CD14-positive monocyte (primary cell): ENCODE measurements at regions of chr16 and their contacts with region 1.

Region 1: GRCh38 chr16:79089735-79090284 is 510.7 kb downstream of the MAF start:
- DNase-seq: peak; percentile 39 to 65 (median 63)
- H3K4me3 ChIP-seq: peak overlapping the region; percentile 41 to 72 (median 50)
- H3K4me3 Mint-ChIP-seq: peak overlapping the region; percentile 83 to 92
- H3K27ac ChIP-seq: peak overlapping the region; percentile 11 to 58
- H3K27ac Mint-ChIP-seq: peak overlapping the region; percentile 80 to 93 (median 87)
- H3K4me1 ChIP-seq: peaks cover 55 to 58% of the 10 kb centered on the region in 2 donors
- H3K4me1 Mint-ChIP-seq: peaks cover 61% of the 10 kb centered on the region
- H3K27me3 ChIP-seq: no peaks in the 10 kb centered on the region
- H3K27me3 Mint-ChIP-seq: peaks cover 0 to 5% (median 0%) of the 10 kb centered on the region in 3 donors
- CTCF ChIP-seq: no peak

Region 2: GRCh38 chr16:79154086-79154485 is 64.3 kb after region 1 on chr16:
- intact Hi-C with region 1: loop called in 1 of 2 experiments (anchors 10 kb)
- DNase-seq: no peak
- H3K4me3 ChIP-seq: no peak overlapping the region
- H3K4me3 Mint-ChIP-seq: no peak overlapping the region
- H3K27ac ChIP-seq: no peak overlapping the region
- H3K27ac Mint-ChIP-seq: peak overlapping the region in 2 of 7 donors; percentile 20 to 26
- H3K4me1 ChIP-seq: peaks cover 19 to 22% of the 10 kb centered on the region in 2 donors
- H3K4me1 Mint-ChIP-seq: peaks cover 19% of the 10 kb centered on the region
- H3K27me3 ChIP-seq: no peaks in the 10 kb centered on the region
- H3K27me3 Mint-ChIP-seq: peaks cover 0 to 4% (median 2%) of the 10 kb centered on the region in 3 donors
- CTCF ChIP-seq: no peak

Region 3: DNA sequence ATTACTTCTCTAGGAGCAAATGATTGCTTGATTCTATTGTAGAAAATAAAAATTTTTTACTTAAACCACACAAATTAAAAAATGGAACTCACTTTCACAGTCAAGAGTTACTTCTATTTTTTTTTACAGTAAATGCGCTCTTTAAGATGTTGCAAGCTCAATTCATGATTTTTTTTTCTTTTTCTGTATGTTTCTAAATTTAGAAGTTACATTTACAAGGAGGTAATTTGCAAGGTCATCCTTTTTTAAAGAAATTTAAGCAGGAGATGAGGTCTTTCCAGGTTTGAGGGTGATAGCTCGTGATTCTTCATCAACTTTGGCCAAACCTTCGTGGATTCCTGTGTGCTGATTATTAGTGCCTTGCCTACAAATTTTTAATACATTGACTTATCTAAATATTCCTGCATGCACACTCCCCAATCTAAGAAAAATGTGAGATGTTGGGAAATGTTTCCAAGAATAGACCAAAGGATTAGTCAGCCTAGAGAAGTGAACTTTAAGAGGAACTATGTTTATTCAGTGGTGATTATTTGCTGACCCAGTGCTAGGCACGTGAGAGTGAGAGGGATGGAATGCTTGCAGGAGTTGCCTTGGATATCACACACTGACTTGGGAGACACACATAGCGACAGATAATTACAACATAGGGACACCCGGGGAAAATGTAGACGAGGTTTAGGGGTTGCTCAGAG is 80.9 kb after region 1 on chr16:
- intact Hi-C with region 1: loop called in 1 of 2 experiments (anchors 2 kb)
- DNase-seq: peak; percentile 91 to 98 (median 91)
- H3K4me3 ChIP-seq: peak overlapping the region in 1 of 3 experiments; percentile 11
- H3K4me3 Mint-ChIP-seq: peak overlapping the region in 1 of 2 donors; percentile 41
- H3K27ac ChIP-seq: peak overlapping the region in 1 of 2 donors; percentile 66
- H3K27ac Mint-ChIP-seq: peak overlapping the region; percentile 66 to 93 (median 87)
- H3K4me1 ChIP-seq: peaks cover 32 to 33% of the 10 kb centered on the region in 2 donors
- H3K4me1 Mint-ChIP-seq: peaks cover 30% of the 10 kb centered on the region
- H3K27me3 ChIP-seq: no peaks in the 10 kb centered on the region
- H3K27me3 Mint-ChIP-seq: peaks cover 0 to 2% (median under 1%) of the 10 kb centered on the region in 3 donors
- CTCF ChIP-seq: no peak